Activated CD4-positive, alpha-beta memory T cell treated with anti-CD3 and anti-CD28 coated beads for 36 hours (primary cell): ENCODE measurements at regions of chr6 and their contacts with region 1.

Region 1: DNA sequence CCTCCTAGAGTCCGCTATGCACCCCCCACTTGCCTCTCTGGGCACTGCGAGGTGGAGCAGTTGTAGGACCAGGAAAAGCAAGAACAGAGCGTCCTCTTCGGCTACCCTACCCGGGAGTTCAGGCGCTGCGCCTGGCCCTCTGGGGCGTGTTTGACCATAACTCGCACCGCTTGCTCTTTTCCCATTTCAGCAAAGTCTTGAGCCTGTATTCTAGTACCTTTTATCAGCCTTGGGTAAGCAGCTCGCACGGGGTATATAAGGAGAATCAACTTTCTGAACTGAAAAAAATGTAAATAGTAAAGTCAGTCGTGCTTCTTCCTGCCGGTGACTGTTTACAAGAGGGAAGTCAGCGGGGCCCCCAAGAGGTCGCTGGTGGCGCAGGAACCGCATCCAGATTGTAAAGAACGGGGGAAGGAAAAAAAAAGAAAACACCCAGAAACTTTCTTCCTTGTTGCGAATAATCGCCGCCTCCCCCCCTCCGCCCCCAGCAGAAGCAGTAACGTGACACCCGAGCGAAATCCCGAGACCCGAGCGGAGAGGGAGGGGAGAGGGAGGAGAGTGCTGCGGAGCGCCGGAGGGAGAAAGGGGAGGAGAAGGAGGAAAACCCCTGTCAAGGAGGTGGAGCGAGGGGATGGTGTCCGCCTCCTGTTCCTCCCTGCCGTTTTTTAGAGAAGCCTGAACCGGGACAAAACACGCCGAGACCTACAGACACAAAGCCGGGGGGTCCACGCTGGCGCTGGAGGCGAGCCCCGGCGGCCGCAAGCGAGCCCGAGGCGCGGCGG is at the start of gene UST:
- DNase-seq: peak; percentile 79
- H3K4me3 Mint-ChIP-seq: peak within 1 kb of the TSS; percentile 88
- H3K27ac Mint-ChIP-seq: peak within 1 kb of the TSS; percentile 78
- H3K4me1 Mint-ChIP-seq: peaks cover 28% of the 10 kb centered on the region
- H3K27me3 Mint-ChIP-seq: peaks cover 8% of the 10 kb centered on the region
- total RNA-seq, gene UST: 3.7 to 4.9 TPM

Region 2: GRCh38 chr6:148608199-148608951 is 138.2 kb before region 1 on chr6:
- CTCF ChIA-PET with region 1: no interaction called
- POLR2A ChIA-PET with region 1: no interaction called
- intact Hi-C with region 1: no loop called
- DNase-seq: no peak
- H3K4me3 Mint-ChIP-seq: no peak overlapping the region
- H3K27ac Mint-ChIP-seq: no peak overlapping the region
- H3K4me1 Mint-ChIP-seq: no peaks in the 10 kb centered on the region
- H3K27me3 Mint-ChIP-seq: peaks cover 9% of the 10 kb centered on the region

Region 3: DNA sequence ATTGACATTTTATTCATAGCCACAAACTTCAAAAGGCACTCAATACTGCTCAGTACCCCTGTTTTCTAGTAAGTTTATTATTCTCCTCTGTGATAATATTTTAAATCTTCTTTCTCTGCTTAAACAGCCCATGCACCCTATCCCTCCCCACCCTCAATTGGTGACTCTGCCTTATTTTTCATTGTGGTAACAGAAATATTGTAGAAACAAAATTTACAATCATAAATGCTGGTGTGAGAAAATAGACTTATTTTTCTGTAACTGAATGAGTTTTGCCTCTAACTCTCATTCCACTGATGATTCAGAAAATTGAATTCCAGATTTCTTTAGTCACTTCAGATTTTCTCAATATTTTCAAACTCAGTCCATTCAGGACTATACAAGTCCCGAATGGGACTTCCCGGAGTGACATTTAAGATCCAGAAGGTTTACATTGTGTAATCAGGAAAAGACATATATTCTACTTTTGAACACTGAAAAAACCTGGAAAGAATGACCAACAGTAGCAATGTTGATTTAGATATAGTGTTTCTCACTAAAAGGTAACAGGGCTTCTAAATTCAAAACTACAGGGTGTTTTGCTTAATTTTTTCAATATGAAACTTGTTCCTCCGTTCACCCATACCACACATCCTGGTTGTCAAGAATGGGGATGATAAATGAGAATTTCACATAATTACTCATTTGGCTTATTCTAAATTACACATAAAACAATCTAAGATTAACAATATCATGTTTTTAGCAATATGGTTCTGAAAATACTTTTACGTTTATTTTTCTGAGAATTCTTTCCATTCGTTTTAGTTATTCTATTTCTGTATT is 34.5 kb before region 1 on chr6:
- CTCF ChIA-PET with region 1: no interaction called
- POLR2A ChIA-PET with region 1: no interaction called
- intact Hi-C with region 1: loop called (anchors 1 kb)
- DNase-seq: no peak
- H3K4me3 Mint-ChIP-seq: no peak overlapping the region
- H3K27ac Mint-ChIP-seq: peak overlapping the region; percentile 64
- H3K4me1 Mint-ChIP-seq: peaks cover 12% of the 10 kb centered on the region
- H3K27me3 Mint-ChIP-seq: peaks cover 5% of the 10 kb centered on the region

Region 4: GRCh38 chr6:148934539-148934938 is 188.0 kb after region 1 on chr6:
- CTCF ChIA-PET with region 1: no interaction called
- POLR2A ChIA-PET with region 1: no interaction called
- intact Hi-C with region 1: no loop called
- DNase-seq: no peak
- H3K4me3 Mint-ChIP-seq: no peak overlapping the region
- H3K27ac Mint-ChIP-seq: no peak overlapping the region
- H3K4me1 Mint-ChIP-seq: no peaks in the 10 kb centered on the region
- H3K27me3 Mint-ChIP-seq: no peaks in the 10 kb centered on the region